Right ventricle myocardium superior (tissue), 1 donor: ENCODE measurements at regions of chr10 and their contacts with region 1.

Region 1: GRCh38 chr10:34815185-34816084 is at the start of gene PARD3:
- DNase-seq: peak; percentile 78
- ATAC-seq: peak; percentile 85
- total RNA-seq, gene PARD3: 33.5 TPM

Region 2: GRCh38 chr10:34666008-34666705 is 149.3 kb before region 1 on chr10:
- intact Hi-C with region 1: loop called (anchors 10 kb)
- DNase-seq: no peak
- ATAC-seq: peak; percentile 84

Region 3: DNA sequence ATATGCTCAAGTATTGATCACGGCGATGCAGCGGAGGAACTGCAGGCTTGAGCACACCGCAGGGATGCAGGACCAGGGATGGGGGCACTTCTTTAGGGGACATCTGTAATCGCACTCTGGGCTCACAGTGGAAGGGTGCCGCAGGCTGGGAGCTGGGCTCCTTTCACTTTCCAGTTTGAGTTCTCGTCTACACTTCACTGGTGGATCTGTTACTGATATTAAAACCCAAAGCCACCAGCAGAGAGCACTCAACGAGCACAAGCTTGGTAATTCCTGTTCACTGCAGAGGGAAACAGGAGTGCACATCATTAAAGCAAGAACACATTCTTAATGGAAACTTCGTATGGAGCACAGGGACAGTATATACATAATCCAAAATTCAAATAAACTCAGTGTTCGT is 91.7 kb before region 1 on chr10:
- intact Hi-C with region 1: loop called (anchors 10 kb)
- DNase-seq: no peak
- ATAC-seq: peak; percentile 69